ENCODE measurements at regions of chr5 and their contacts with region 1.

Region 1: GRCh38 chr5:126002222-126002897 is 420.8 kb upstream of the GRAMD2B start:
- DNase-seq: peak; percentile 81 to 84
- ATAC-seq: peak; percentile 94
- H3K4me3 ChIP-seq: no peak overlapping the region
- H3K27ac ChIP-seq: peak overlapping the region; percentile 48 to 57
- H3K4me1 ChIP-seq: peaks cover 5% of the 10 kb centered on the region in 2 donors
- H3K27me3 ChIP-seq: no peaks in the 10 kb centered on the region

Region 2: GRCh38 chr5:124697933-124698591 is 1304.3 kb before region 1 on chr5:
- intact Hi-C with region 1: loop called in 1 of 2 experiments (anchors 10 kb)
- DNase-seq: no peak
- ATAC-seq: peak; percentile 73
- H3K4me3 ChIP-seq: no peak overlapping the region
- H3K27ac ChIP-seq: peak overlapping the region; percentile 88 to 96
- H3K4me1 ChIP-seq: peaks cover 3 to 4% of the 10 kb centered on the region in 2 donors
- H3K27me3 ChIP-seq: no peaks in the 10 kb centered on the region

Region 3: DNA sequence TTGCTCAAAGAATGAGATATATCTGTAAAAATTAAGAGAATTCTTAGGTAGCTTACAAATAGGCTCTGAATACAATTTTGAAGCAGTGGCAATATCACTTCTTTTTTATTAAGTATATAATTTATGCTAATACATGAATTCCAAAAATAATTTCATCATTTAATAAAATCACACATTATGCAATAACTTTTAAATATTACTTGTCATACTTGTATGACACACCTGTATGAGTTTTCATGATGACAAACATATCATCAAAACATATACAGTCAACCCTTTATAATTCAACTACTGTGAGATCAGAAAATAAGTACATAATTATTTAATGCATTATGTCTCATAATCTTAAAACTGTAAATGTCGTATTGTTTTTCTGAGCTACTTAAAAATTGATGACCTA is 388.2 kb before region 1 on chr5:
- intact Hi-C with region 1: no loop called
- DNase-seq: no peak
- ATAC-seq: no peak
- H3K4me3 ChIP-seq: no peak overlapping the region
- H3K27ac ChIP-seq: no peak overlapping the region
- H3K4me1 ChIP-seq: no peaks in the 10 kb centered on the region
- H3K27me3 ChIP-seq: no peaks in the 10 kb centered on the region

Region 4: GRCh38 chr5:126508962-126509279 is 506.6 kb after region 1 on chr5:
- intact Hi-C with region 1: no loop called
- DNase-seq: no peak
- ATAC-seq: no peak
- H3K4me3 ChIP-seq: no peak overlapping the region
- H3K27ac ChIP-seq: no peak overlapping the region
- H3K4me1 ChIP-seq: no peaks in the 10 kb centered on the region
- H3K27me3 ChIP-seq: no peaks in the 10 kb centered on the region